ENCODE measurements at regions of chr7 and their contacts with region 1.

Region 1: DNA sequence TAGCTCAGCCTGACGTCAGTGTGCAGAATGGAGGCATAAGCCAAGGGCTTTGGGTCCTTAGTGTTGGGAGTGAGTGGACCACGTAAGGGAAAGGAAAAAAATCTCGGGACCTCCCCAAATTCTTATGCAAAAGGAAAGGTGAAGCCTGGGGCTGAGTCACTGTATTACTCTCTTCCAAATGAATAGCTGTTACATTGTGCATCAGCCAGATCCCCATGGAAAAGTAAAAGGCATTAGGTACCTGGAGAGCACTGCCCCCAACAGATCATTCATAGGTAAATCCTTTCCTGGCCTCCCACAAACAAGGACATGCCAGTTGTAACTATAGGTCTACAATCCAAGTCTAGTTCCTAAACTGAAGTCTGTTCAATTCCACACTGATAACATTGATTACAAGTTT is 170.5 kb downstream of the C1GALT1 start:
- DNase-seq: peak; percentile 18 to 57
- H3K4me3 ChIP-seq: no peak overlapping the region
- H3K27ac ChIP-seq: no peak overlapping the region
- H3K4me1 ChIP-seq: peaks cover 37% of the 10 kb centered on the region
- H3K27me3 ChIP-seq: no peaks in the 10 kb centered on the region
- CTCF ChIP-seq: peak; percentile 32; the same call in 1 of the 2 replicates

Region 2: GRCh38 chr7:7176421-7177043 is 176.3 kb before region 1 on chr7:
- CTCF ChIA-PET with region 1: no interaction called
- POLR2A ChIA-PET with region 1: no interaction called
- intact Hi-C with region 1: loop called (anchors 1 kb)
- DNase-seq: peak; percentile 24 to 83
- H3K4me3 ChIP-seq: peak overlapping the region; percentile 3; the same call in 1 of the 2 replicates
- H3K27ac ChIP-seq: peak overlapping the region; percentile 87
- H3K4me1 ChIP-seq: peaks cover 47% of the 10 kb centered on the region
- H3K27me3 ChIP-seq: no peaks in the 10 kb centered on the region
- CTCF ChIP-seq: no peak

Region 3: DNA sequence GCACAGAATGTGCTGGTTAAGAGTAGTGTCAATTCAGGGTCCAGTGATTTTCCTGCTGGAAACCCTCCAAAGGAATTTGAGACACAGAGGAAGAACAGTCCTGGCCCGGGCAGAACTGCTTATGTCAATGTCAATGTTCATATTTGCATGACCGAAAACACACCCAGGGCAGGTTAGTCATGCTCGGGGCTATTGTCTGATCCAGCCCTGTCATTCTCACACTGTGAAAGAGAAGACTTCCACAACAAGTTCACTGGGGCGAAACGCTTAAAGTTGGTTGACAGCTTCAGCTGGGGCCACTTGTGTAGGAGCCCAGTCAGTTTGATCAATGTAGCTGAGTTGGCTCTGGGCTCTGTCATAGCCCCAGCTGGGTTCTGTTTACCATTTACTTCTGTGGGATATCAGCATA is 31.1 kb before region 1 on chr7:
- CTCF ChIA-PET with region 1: no interaction called
- POLR2A ChIA-PET with region 1: no interaction called
- intact Hi-C with region 1: loop called (anchors 1 kb)
- DNase-seq: peak; percentile 57 to 72
- H3K4me3 ChIP-seq: no peak overlapping the region
- H3K27ac ChIP-seq: no peak overlapping the region
- H3K4me1 ChIP-seq: peaks cover 24% of the 10 kb centered on the region
- H3K27me3 ChIP-seq: no peaks in the 10 kb centered on the region
- CTCF ChIP-seq: no peak

Region 4: DNA sequence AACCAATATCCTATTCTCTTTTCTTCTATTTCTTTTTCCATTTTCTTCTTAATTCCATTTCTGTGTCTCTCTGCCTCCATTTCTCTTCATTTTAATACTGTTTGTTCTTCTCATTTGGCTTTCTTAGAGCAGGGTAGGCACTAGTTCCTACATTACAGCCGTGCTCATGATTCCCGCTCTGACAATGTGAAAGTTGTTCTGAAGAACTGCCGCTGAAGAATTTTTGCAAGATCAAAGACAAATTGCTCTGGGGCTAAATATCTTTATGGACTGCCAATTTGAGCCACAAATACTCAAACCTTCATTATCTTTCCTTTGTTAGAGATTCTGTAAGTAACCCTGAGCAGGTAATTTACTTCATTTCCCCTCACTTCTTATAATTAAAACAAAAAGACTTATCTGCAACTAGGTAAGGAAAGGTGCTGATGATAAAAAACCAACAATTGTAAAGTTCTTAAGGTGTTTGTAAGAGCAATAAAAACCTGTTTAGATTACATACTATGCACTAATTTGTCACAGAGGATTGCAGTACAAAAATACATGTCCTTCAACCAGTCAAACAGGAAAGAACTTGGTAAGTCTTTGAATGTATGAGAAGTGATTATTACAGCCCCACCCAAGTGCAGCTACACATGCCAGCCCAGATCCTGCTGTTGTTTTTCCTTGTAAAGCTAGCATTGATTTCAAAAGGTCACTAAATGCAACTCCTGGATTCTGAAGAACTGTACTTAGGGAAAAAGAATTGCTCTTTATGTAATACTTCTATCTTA is 55.3 kb after region 1 on chr7:
- CTCF ChIA-PET with region 1: no interaction called
- POLR2A ChIA-PET with region 1: no interaction called
- intact Hi-C with region 1: loop called (anchors 2 kb)
- DNase-seq: peak; percentile 38 to 91
- H3K4me3 ChIP-seq: peak overlapping the region; percentile 1; the same call in 1 of the 2 replicates
- H3K27ac ChIP-seq: peak overlapping the region; percentile 64
- H3K4me1 ChIP-seq: peaks cover 24% of the 10 kb centered on the region
- H3K27me3 ChIP-seq: no peaks in the 10 kb centered on the region
- CTCF ChIP-seq: no peak

Region 5: GRCh38 chr7:7566651-7567611 is 214.1 kb after region 1 on chr7 and contains the start of gene MIOS:
- CTCF ChIA-PET with region 1: no interaction called
- POLR2A ChIA-PET with region 1: no interaction called
- intact Hi-C with region 1: loop called (anchors 5 kb)
- DNase-seq: peak; percentile 67 to 91
- H3K4me3 ChIP-seq: peak within 1 kb of the TSS; percentile 92
- H3K27ac ChIP-seq: peak within 1 kb of the TSS; percentile 97
- H3K4me1 ChIP-seq: peaks cover 64% of the 10 kb centered on the region
- H3K27me3 ChIP-seq: no peaks in the 10 kb centered on the region
- CTCF ChIP-seq: no peak
- total RNA-seq, gene MIOS: 35.8 and 42.0 TPM in 2 replicates

Region 6: GRCh38 chr7:7932580-7932979 is 579.7 kb after region 1 on chr7:
- CTCF ChIA-PET with region 1: no interaction called
- POLR2A ChIA-PET with region 1: no interaction called
- intact Hi-C with region 1: no loop called
- DNase-seq: no peak
- H3K4me3 ChIP-seq: no peak overlapping the region
- H3K27ac ChIP-seq: no peak overlapping the region
- H3K4me1 ChIP-seq: no peaks in the 10 kb centered on the region
- H3K27me3 ChIP-seq: no peaks in the 10 kb centered on the region
- CTCF ChIP-seq: no peak

Measured in PC-9 (cell line).